PC-3 (cell line): ENCODE measurements at regions of chr5 and their contacts with region 1.

Region 1: DNA sequence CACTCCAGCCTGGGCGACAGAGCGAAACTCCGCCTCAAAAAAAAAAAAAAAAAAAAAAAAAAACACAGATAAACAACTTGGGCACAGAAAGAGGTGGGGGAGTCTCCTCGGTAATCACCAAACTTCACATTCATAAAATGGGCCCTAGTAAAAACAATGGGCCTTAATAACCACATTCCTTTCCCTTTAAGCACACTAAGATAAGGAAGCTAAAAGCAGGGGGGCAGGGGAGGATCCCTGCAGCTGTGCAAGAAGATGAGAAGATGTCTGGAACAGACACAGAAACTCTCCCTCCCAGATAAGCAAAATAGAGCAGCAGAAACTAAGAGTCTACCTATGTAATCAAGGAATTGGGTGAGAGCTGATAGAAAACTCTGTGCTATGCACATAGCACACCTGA is 111.2 kb upstream of the FAM174A start:
- DNase-seq: no peak
- ATAC-seq: no peak
- H3K4me3 ChIP-seq: no peak overlapping the region
- H3K27ac ChIP-seq: no peak overlapping the region
- H3K4me1 ChIP-seq: no peaks in the 10 kb centered on the region
- H3K27me3 ChIP-seq: no peaks in the 10 kb centered on the region
- CTCF ChIP-seq: no peak

Region 2: DNA sequence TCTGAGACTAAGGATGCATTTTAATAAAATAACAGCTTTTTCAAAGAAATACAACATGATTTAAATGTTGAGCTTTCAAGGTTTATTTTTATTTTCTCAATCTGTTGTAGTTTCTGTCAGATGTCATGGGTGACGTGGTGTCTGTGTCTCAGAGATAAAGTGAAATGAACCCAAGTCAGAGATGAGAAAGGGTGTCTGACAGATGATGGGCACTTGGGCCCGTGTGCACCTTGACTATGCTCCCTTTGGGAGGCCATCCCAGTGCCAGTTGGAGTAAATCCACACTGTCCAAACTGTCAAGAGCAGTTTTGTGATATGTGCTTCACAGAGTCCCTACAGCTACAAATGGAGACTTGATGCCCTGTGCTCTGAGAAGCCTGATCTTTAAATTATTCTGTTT is 425.7 kb before region 1 on chr5:
- CTCF ChIA-PET with region 1: no interaction called
- POLR2A ChIA-PET with region 1: no interaction called
- intact Hi-C with region 1: no loop called
- DNase-seq: no peak
- ATAC-seq: no peak
- H3K4me3 ChIP-seq: no peak overlapping the region
- H3K27ac ChIP-seq: no peak overlapping the region
- H3K4me1 ChIP-seq: no peaks in the 10 kb centered on the region
- H3K27me3 ChIP-seq: no peaks in the 10 kb centered on the region
- CTCF ChIP-seq: no peak

Region 3: GRCh38 chr5:100615362-100615761 is 191.3 kb after region 1 on chr5:
- CTCF ChIA-PET with region 1: no interaction called
- POLR2A ChIA-PET with region 1: no interaction called
- intact Hi-C with region 1: loop called (anchors 10 kb)
- DNase-seq: no peak
- ATAC-seq: no peak
- H3K4me3 ChIP-seq: no peak overlapping the region
- H3K27ac ChIP-seq: no peak overlapping the region
- H3K4me1 ChIP-seq: no peaks in the 10 kb centered on the region
- H3K27me3 ChIP-seq: peaks cover 9% of the 10 kb centered on the region; the same call in 1 of the 2 replicates
- CTCF ChIP-seq: no peak